Activated CD8-positive, alpha-beta T cell treated with anti-CD3 and anti-CD28 coated beads, Interleukin-2, amount 10 ng/mL, durations not matched to agents 7 days and 5 days (primary cell): ENCODE measurements at regions of chr1 and their contacts with region 1.

Region 1: GRCh38 chr1:156728597-156729462 is at the start of gene ISG20L2:
- DNase-seq: peak; percentile 99
- ATAC-seq: peak; percentile 90
- H3K4me3 Mint-ChIP-seq: no peak within 1 kb of the TSS
- H3K27ac Mint-ChIP-seq: no peak within 1 kb of the TSS
- H3K4me1 Mint-ChIP-seq: peaks cover 29% of the 10 kb centered on the region
- H3K27me3 Mint-ChIP-seq: no peaks in the 10 kb centered on the region
- total RNA-seq, gene ISG20L2: 56.3 to 58.8 TPM

Region 2: DNA sequence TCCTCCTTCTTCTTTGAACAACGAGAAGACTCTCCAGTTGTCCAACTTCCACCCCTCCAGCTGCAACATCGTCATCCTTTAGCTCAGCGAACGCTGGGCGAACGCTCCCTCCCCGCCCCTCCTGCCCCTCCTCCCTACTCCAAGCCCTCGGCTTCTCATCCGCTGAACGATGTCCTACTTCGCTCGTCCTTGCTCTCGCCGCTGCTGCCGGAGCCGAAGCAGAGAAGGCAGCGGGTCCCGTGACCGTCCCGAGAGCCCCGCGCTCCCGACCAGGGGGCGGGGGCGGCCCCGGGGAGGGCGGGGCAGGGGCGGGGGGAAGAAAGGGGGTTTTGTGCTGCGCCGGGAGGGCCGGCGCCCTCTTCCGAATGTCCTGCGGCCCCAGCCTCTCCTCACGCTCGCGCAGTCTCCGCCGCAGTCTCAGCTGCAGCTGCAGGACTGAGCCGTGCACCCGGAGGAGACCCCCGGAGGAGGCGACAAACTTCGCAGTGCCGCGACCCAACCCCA is 87.0 kb before region 1 on chr1 and contains the start of gene BCAN:
- CTCF ChIA-PET with region 1: interaction called, 20 read pairs
- POLR2A ChIA-PET with region 1: interaction called, 3 read pairs
- DNase-seq: no peak
- ATAC-seq: peak; percentile 30
- H3K4me3 Mint-ChIP-seq: peak within 1 kb of the TSS; percentile 29
- H3K27ac Mint-ChIP-seq: no peak within 1 kb of the TSS
- H3K4me1 Mint-ChIP-seq: peaks cover 37% of the 10 kb centered on the region
- H3K27me3 Mint-ChIP-seq: peaks cover 77% of the 10 kb centered on the region
- total RNA-seq, gene BCAN: not detected

Region 3: DNA sequence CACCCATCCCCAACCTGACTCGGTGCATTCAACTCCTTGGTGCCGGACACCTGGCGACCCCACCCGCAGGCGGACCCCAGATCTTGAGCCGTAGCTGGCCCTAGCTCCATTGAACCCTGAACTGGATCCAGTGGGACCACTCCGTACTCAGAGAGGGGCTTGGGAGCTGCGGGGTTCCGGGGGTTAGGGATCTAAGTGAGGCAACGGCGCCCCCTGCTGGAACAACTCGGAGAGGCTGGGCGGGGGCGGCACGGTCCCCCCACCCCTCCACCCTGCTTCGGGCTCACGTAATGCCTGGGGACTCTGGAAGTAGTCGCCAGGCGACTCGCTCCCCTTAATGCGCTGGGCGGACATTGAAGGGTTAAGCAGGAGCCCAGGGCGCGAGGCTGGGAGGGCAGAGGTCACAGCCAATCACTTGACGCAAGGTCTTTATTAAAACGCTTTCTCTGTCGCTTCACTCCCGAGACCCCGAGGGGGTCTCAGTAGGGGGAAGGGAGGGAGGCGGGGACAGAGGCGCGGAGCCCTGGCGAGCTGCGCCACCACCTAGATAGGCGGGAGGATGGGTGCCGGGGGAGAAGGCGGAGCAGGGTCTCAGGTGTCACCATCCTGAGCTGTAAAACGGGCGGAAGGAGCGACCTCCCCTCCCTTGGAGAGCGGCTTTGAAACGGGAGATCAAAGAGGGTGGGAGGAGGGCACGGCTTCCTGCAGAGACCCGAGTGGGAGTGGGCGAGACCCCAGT is 22.7 kb before region 1 on chr1:
- CTCF ChIA-PET with region 1: interaction called, 197 read pairs
- POLR2A ChIA-PET with region 1: interaction called, 7 read pairs
- DNase-seq: peak; percentile 70
- ATAC-seq: peak; percentile 65
- H3K4me3 Mint-ChIP-seq: peak overlapping the region; percentile 71
- H3K27ac Mint-ChIP-seq: no peak overlapping the region
- H3K4me1 Mint-ChIP-seq: peaks cover 28% of the 10 kb centered on the region
- H3K27me3 Mint-ChIP-seq: peaks cover 33% of the 10 kb centered on the region

Region 4: GRCh38 chr1:156767101-156767878 is 38.5 kb after region 1 on chr1 and contains the start of gene PRCC:
- CTCF ChIA-PET with region 1: interaction called, 206 read pairs
- POLR2A ChIA-PET with region 1: interaction called, 35 read pairs
- DNase-seq: peak; percentile 99
- ATAC-seq: peak; percentile 96
- H3K4me3 Mint-ChIP-seq: no peak within 1 kb of the TSS
- H3K27ac Mint-ChIP-seq: no peak within 1 kb of the TSS
- H3K4me1 Mint-ChIP-seq: peaks cover 42% of the 10 kb centered on the region
- H3K27me3 Mint-ChIP-seq: no peaks in the 10 kb centered on the region
- total RNA-seq, gene PRCC: 71.9 to 75.5 TPM

Region 5: GRCh38 chr1:156813750-156814570 is 85.1 kb after region 1 on chr1:
- CTCF ChIA-PET with region 1: interaction called, 20 read pairs
- POLR2A ChIA-PET with region 1: interaction called, 11 read pairs
- DNase-seq: peak; percentile 83
- ATAC-seq: peak; percentile 55
- H3K4me3 Mint-ChIP-seq: peak overlapping the region; percentile 92
- H3K27ac Mint-ChIP-seq: peak overlapping the region; percentile 100
- H3K4me1 Mint-ChIP-seq: peaks cover 70% of the 10 kb centered on the region
- H3K27me3 Mint-ChIP-seq: no peaks in the 10 kb centered on the region

Region 6: GRCh38 chr1:156860113-156860627 is 131.3 kb after region 1 on chr1:
- CTCF ChIA-PET with region 1: interaction called, 203 read pairs
- POLR2A ChIA-PET with region 1: interaction called, 22 read pairs
- DNase-seq: peak; percentile 68
- ATAC-seq: peak; percentile 62
- H3K4me3 Mint-ChIP-seq: peak overlapping the region; percentile 72
- H3K27ac Mint-ChIP-seq: peak overlapping the region; percentile 54
- H3K4me1 Mint-ChIP-seq: peaks cover 56% of the 10 kb centered on the region
- H3K27me3 Mint-ChIP-seq: peaks cover 39% of the 10 kb centered on the region